ENCODE measurements at regions of chr15 and their contacts with region 1.

Region 1: DNA sequence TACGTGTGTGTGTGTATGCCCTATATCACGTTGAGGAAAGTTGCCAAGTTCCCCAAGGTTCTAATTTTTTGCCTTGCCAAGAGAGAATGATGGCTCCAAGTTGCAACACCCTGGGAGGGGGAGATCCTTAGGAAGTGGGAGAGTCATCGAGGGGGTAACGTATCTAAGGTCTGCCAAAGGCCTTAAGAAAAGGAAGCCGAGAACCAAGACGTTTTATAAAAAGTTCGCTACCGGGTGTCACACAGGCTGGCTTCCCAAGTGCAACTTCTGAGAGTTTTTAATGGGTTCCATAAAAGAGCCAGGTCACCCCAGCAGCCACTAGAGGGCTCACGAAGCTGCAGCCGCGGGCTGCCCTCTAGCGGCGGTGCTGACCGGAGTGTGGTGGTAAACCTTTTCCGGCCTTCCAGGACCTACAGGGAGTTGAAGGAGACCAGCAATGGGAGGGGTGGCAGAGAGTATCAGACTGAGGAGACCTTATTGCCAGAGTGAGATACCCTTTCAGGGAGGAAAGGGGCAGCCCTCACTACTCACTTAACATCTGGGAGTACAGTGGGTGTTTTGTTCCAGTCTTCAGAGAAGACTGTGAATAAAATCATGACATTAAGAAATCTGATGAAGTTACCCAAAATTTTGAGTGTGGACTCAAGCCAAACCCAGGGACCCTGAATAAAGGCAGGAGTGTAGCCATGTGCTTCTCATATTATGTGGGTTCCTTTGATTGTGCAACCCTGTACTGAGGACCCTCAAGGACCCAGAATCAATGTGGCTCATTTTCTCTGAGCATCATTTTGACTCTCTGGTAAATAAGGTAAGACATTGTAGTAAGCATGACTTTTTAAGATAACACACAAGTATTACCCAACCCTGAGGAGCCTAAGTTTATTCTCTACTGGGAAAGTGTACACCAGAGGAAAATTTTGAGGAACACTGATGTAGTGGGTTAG is 2.5 kb upstream of the RFX7 start:
- DNase-seq: peak; percentile 52
- H3K4me3 ChIP-seq: peak overlapping the region; percentile 31
- H3K27ac ChIP-seq: no peak overlapping the region
- H3K27me3 ChIP-seq: no peaks in the 10 kb centered on the region
- CTCF ChIP-seq: peak; percentile 100

Region 2: GRCh38 chr15:56146756-56147155 is 99.4 kb before region 1 on chr15:
- CTCF ChIA-PET with region 1: interaction called, 10 read pairs
- POLR2A ChIA-PET with region 1: interaction called, 3 read pairs
- DNase-seq: no peak
- H3K4me3 ChIP-seq: no peak overlapping the region
- H3K27ac ChIP-seq: no peak overlapping the region
- H3K27me3 ChIP-seq: no peaks in the 10 kb centered on the region
- CTCF ChIP-seq: no peak

Region 3: DNA sequence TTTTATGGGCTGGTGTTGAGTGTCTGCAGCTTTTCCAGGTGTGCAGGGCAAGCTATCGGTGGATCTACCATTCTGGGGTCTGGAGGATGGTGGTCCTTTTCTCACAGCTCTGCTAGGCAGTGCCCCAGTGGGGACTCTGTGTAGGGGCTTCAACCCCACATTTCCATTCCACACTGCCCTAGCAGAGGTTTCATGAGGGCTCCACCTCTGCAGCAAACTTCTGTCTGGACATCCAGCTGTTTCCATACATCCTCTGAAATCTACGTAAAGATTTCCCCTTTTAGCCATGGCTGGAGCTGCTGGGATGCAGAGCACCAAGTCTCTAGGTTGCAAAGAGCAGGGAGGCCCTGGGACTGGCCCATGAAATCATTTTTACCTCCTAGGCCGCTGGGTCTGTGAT is 14.1 kb before region 1 on chr15:
- CTCF ChIA-PET with region 1: interaction called, 12 read pairs
- POLR2A ChIA-PET with region 1: no interaction called
- DNase-seq: no peak
- H3K4me3 ChIP-seq: no peak overlapping the region
- H3K27ac ChIP-seq: no peak overlapping the region
- H3K27me3 ChIP-seq: no peaks in the 10 kb centered on the region
- CTCF ChIP-seq: no peak

Region 4: GRCh38 chr15:56325186-56325585 is 79.0 kb after region 1 on chr15:
- CTCF ChIA-PET with region 1: no interaction called
- POLR2A ChIA-PET with region 1: no interaction called
- DNase-seq: no peak
- H3K4me3 ChIP-seq: no peak overlapping the region
- H3K27ac ChIP-seq: no peak overlapping the region
- H3K27me3 ChIP-seq: no peaks in the 10 kb centered on the region
- CTCF ChIP-seq: no peak

Region 5: DNA sequence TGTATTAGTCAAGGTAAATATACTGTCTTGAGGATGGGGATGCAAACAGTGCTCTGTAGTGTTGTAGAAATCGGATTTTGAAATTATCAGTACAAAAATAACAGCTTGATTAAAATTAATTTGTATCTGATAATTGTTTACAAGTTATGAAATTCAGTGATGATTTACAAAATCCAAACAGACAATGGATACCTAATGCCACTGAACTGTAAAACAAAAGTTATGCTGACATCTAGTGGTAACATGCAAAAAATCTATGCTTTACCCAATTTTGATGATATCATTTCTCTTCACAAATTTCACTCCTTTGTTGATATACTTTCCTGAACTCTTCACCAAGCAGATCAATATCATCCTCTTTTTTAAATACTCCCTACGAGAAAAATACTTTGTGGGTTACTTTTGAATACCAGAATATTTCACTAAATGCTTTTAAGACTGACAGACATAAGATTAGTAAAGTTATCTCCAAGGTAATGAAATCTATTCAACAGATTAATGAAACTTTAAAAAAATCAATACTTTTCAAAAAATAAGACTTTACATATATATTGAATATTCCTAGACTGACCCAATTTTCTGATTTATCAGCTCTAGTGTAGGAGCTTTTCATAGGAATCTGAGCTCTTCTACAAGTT is 182.8 kb after region 1 on chr15:
- CTCF ChIA-PET with region 1: interaction called, 62 read pairs
- POLR2A ChIA-PET with region 1: no interaction called
- DNase-seq: peak; percentile 1
- H3K4me3 ChIP-seq: no peak overlapping the region
- H3K27ac ChIP-seq: no peak overlapping the region
- H3K27me3 ChIP-seq: no peaks in the 10 kb centered on the region
- CTCF ChIP-seq: peak; percentile 55

Region 6: DNA sequence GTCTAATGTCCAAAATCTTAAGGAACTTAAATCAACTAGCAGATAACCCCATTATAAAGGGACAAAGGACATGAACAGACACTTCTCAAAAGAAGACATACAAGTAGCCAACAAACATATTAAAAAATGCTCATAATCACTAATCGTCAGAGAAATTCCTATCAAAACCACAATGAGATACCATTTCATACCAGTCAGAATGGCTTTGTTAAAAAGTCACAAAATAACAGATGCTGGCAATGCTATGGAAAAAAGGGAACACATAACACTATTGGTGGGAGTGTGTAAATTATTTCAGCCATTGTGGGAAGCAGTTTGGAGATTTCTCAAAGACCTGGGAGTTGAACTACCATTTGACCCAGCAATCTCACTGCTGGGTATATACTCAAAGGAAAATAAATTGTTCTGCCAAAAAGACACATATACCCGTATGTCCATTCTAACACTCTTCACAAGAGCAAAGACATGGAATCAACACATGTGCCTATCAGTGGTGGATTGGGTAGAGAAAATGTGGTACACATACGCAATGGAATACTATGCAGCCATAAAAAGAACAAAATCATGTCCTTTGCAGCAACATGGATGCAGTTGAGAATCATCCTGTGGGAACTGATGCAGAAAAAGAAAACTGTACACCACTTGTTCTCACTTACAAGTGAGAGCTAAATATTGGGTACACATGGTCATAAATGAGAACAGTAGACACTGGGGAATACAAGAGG is 750.8 kb after region 1 on chr15:
- CTCF ChIA-PET with region 1: no interaction called
- POLR2A ChIA-PET with region 1: no interaction called
- DNase-seq: no peak
- H3K4me3 ChIP-seq: no peak overlapping the region
- H3K27ac ChIP-seq: no peak overlapping the region
- H3K27me3 ChIP-seq: no peaks in the 10 kb centered on the region
- CTCF ChIP-seq: no peak

Measured in AG04450 (cell line).